IMR-90 (cell line): ENCODE measurements at regions of chr6 and their contacts with region 1.

Region 1: DNA sequence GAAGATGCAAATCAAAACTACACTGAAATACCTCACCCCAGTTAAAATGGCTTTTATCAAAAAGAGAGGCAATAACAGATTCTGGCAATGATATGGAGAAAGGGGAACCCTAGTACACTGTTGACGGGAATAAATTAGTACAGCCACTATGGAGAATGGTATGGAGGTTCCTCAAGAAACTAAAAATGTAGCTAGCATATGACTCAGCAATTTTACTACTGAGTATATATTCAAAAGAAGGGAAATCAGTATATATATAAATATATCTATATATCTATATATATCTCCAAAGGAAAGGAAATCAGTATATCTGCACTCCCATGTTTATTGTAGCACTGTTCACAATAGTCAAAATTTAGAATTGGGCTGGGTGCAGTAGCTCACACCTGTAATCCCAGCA is 113.9 kb downstream of the KLHL32 start:
- DNase-seq: no peak
- ATAC-seq: no peak
- H3K4me3 ChIP-seq: no peak overlapping the region
- H3K27ac ChIP-seq: no peak overlapping the region
- H3K4me1 ChIP-seq: no peaks in the 10 kb centered on the region
- H3K27me3 ChIP-seq: no peaks in the 10 kb centered on the region
- CTCF ChIP-seq: no peak
- POLR2A ChIP-seq: no peak
- RAD21 ChIP-seq: no peak

Region 2: DNA sequence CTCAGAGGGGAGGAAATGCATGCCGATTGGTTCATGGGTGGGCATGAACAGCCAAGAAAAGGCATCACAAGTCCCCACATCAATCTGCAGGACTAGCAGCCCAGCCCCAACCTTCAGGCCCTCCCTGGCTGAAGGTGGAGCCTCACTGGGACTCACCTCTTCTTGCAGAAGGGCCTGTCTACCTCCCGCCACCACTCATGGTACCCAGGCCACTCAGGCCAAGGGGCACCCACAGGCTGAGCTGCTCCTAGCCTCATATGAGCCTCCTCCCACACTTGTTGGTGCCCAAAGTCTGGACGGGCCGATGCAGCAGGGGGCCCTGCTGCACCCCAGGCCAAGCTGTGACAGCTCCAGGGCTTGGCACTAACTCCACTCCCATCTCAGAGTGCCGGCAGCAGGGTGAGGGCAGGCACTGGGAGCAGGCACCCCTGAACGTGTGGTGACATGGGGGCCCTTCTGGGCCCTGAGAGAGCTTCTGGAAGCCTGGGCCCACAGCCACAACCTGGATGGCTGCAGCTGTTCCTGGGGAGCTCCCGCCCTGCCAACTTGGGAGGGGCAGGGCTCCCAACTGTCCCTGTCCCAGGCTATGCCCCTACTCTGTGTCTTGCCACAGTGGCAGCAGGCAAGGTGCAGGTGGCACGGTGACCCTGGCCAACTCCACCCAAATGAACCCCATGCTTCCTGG is 1036.4 kb before region 1 on chr6:
- CTCF ChIA-PET with region 1: no interaction called
- POLR2A ChIA-PET with region 1: no interaction called
- dilution Hi-C with region 1: no loop called
- in situ Hi-C with region 1: no loop called
- intact Hi-C with region 1: loop called (anchors 5 kb)
- DNase-seq: no peak
- ATAC-seq: no peak
- H3K4me3 ChIP-seq: no peak overlapping the region
- H3K27ac ChIP-seq: no peak overlapping the region
- H3K4me1 ChIP-seq: no peaks in the 10 kb centered on the region
- H3K27me3 ChIP-seq: no peaks in the 10 kb centered on the region
- CTCF ChIP-seq: no peak
- POLR2A ChIP-seq: no peak
- RAD21 ChIP-seq: no peak